ENCODE measurements at regions of chr1 and their contacts with region 1.

Region 1: GRCh38 chr1:153816283-153816889 is 41.2 kb downstream of the SLC27A3 start:
- DNase-seq: no peak
- CTCF ChIP-seq: no peak

Region 2: GRCh38 chr1:153202006-153202405 is 614.4 kb before region 1 on chr1:
- in situ Hi-C with region 1: no loop called
- DNase-seq: no peak
- CTCF ChIP-seq: no peak

Region 3: DNA sequence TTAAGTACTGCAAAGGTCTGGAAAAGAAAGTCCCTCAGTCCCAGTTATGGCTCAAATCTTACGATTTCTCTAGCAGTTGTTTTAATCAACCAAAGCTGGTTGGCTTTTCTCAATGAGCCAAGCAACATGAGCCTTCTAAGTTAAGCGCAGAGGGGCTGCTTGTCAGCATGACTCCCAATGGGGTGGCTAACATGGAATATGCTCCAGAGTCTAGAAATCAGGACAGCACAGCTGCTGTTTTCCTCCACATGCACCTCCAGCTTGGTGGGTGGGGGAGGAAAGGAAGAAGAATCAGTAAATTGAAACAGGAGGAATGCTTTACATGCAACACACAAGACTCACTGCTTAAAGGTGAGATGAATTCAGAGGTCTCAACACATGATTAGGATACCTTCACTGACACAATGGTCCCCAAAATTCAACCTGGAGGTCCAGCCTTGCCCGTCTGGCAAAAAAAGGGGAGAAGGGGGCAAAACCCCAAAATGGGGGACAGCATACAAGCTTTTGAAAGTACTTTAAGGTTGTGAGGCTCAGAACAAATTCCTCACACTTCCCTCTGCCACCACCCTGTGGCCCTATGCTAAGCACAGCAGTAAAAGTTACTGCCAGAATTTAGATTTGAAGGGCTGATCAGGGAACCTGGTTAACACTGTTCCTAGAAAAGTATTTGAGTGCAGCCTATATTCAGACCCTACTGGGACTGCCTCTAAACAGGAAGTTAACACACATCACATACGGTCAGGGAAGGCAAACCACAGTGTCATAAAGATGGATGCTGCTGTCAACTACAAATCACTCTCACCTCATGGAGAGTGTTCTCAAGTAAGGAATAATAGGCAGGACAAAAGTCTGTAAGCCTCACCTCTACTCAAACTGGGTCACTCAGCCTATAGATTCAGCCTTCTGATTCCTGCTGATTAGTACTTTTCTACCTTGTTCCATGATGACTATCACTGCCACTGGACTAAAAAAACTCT is 103.8 kb after region 1 on chr1:
- in situ Hi-C with region 1: loop called (anchors 10 kb)
- DNase-seq: no peak
- CTCF ChIP-seq: peak; percentile 54

Measured in GM13977 (cell line).